Posterior cingulate gyrus (tissue), 11 donors: ENCODE measurements at regions of chr5 and their contacts with region 1.

Region 1: GRCh38 chr5:151115274-151115905 is 34.6 kb upstream of the TNIP1 start:
- DNase-seq: peak; percentile 65 to 97 (median 84)

Region 2: DNA sequence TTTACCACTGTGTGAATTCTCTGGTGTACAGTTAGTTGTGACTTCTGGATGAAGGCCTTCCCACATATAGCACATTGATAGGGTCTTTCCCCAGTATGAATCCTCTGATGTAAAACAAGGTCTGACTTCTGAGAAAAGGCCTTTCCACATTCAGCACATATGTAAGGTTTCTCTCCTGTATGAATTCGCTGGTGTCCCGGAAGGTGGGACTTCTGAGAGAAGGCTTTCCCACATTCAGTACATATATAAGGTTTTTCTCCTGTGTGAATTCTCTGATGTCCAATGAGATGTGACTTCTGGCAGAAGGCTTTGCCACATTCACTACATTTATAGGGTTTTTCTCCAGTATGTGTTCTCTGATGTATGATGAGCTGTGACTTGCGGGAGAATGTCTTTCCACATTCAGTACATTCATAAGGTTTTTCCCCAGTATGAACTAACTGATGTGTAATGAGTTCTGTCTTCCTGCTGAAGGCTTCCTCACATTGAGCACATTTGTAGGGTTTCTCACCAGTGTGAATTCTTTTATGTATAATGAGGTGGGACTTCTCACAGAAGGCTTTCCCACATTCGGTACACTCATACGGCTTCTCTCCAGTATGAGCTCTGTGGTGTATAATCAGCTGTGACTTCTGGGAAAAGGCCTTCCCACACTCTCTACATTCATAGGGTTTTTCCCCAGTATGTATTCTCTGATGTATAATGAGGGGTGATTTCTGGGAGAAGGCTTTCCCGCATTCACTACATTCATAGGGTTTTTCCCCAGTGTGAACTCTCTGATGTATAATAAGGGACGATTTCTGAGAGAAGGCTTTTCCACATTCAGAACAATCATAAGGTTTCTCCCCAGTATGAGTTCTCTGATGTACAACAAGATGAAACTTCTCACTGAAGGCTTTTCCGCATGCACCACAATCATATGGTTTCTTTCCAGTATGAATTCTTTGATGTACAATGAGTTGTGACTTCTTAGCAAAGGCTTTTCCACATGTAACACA is 219.7 kb before region 1 on chr5:
- intact Hi-C with region 1: no loop called
- DNase-seq: no peak

Region 3: DNA sequence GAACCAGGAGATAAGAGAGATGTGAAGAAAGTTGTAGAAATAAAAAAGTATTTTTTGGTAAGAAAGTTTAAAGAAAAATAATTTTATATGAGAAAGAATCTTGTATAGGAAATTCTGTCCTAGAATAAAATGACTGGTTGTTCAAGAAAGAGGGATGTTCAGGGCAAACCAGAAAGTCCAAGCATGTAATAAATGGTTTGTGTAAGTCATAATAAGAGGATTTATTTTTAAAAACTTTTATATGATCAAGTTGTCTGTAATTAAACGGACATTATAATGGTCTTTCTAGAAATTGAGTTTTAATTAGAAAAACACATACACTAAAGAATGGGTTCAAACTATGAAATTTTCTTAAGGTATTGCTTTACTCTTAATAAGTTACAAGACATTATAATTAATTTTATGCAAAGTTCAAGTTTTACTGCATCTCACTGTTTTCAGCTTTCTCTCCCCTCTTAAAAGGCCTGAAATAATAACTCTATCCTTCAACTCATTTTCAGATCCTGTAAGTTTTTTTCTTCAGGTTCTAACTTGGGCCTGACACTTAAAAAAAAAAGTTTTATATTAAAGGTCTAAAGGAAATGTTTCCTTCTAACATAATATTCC is 154.5 kb before region 1 on chr5:
- intact Hi-C with region 1: no loop called
- DNase-seq: no peak

Region 4: DNA sequence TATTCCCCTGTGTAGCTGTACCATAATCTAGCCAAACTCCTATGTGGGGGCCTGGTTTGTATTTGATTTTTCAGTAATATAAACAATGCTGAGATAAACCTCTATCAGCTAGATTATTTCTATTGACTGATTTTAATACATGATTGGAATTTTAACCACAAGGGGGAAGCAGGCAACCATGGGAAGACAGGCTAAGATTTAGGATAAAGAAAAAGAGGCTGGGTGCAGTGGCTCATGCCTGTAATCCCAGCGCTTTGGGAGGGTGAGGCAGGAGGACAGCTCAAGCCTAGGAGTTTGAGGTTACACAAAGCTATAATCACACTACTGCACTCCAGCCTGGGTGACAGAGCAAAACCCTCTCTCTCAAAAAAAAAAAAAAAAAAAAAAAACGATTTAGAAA is 113.1 kb before region 1 on chr5:
- intact Hi-C with region 1: loop called (anchors 5 kb)
- DNase-seq: no peak

Region 5: DNA sequence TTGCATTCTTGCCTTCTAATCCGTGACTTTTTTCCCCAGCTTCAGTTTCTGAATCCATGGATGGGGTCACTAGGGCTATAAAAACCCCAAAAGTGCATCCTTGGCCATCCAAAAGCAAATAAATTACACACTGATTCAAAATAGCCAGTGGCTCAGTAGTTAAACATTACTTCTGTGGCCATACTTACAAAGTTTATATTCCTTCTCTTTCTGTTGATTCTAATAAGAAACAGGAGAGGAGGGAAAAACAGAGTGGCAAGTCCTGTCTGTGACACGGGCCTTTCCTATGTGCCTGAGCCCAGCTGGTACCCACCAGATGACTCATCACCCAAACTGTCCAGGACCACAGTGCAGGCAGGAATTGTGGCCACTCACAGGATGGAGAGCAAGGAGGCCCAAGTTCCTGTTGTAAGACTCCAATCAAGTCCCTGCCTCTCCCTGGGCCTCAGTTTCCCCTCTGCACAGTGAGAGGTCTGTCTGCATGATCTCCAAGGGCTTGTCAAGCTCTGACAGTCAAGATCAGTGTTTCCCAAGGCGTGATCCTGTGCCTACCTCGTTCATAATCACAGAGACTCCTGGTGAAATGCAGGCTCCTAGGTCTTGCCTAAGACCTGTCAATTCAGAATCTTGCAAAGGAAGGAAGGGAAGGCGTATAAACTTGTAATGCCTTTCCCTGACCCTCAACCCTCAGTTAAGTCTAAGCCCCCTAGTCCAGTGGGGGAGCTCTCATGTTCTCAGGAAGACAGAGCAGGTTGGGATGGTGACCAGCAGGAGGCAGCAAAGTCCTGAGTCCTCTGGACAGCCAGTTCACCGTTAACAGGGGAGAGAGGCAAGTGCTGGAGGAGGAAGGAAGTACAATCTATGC is 64.1 kb before region 1 on chr5:
- intact Hi-C with region 1: loop called (anchors 1 kb)
- DNase-seq: peak; percentile 31 to 95 (median 76)